ENCODE measurements at regions of chr9 and their contacts with region 1.

Region 1: GRCh38 chr9:91207729-91208418 is 153.8 kb downstream of the AUH start:
- DNase-seq: peak; percentile 61
- H3K4me3 Mint-ChIP-seq: peak overlapping the region; percentile 7
- H3K27ac Mint-ChIP-seq: peak overlapping the region; percentile 98
- H3K4me1 Mint-ChIP-seq: peaks cover 68% of the 10 kb centered on the region
- H3K27me3 Mint-ChIP-seq: no peaks in the 10 kb centered on the region

Region 2: GRCh38 chr9:91036826-91037510 is 170.9 kb before region 1 on chr9:
- CTCF ChIA-PET with region 1: interaction called, 4 read pairs
- intact Hi-C with region 1: loop called (anchors 1 kb)
- DNase-seq: peak; percentile 87
- H3K4me3 Mint-ChIP-seq: peak overlapping the region; percentile 42
- H3K27ac Mint-ChIP-seq: no peak overlapping the region
- H3K4me1 Mint-ChIP-seq: peaks cover 27% of the 10 kb centered on the region
- H3K27me3 Mint-ChIP-seq: peaks cover 36% of the 10 kb centered on the region

Region 3: DNA sequence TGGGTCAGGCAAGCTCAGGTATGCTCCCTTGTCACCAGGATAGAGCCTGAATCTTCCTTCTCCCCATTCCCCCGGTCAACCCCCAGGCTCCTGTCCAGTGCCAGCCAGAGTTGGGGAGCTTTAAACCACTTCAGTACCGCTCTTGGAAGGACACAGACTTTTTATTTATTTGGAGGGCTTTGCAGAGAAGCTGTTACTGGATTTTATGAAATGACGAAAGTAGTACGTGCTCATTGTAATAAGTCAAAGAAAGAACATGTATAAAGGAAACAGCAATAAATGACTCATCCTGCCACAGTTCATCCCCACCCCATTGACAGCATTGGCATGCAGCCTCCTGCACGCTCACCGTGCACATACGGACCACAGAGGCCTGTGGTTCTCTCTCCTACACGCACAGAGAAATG is 76.4 kb before region 1 on chr9:
- CTCF ChIA-PET with region 1: no interaction called
- intact Hi-C with region 1: loop called (anchors 1 kb)
- DNase-seq: peak; percentile 86
- H3K4me3 Mint-ChIP-seq: no peak overlapping the region
- H3K27ac Mint-ChIP-seq: peak overlapping the region; percentile 82
- H3K4me1 Mint-ChIP-seq: peaks cover 15% of the 10 kb centered on the region
- H3K27me3 Mint-ChIP-seq: peaks cover 11% of the 10 kb centered on the region

Region 4: DNA sequence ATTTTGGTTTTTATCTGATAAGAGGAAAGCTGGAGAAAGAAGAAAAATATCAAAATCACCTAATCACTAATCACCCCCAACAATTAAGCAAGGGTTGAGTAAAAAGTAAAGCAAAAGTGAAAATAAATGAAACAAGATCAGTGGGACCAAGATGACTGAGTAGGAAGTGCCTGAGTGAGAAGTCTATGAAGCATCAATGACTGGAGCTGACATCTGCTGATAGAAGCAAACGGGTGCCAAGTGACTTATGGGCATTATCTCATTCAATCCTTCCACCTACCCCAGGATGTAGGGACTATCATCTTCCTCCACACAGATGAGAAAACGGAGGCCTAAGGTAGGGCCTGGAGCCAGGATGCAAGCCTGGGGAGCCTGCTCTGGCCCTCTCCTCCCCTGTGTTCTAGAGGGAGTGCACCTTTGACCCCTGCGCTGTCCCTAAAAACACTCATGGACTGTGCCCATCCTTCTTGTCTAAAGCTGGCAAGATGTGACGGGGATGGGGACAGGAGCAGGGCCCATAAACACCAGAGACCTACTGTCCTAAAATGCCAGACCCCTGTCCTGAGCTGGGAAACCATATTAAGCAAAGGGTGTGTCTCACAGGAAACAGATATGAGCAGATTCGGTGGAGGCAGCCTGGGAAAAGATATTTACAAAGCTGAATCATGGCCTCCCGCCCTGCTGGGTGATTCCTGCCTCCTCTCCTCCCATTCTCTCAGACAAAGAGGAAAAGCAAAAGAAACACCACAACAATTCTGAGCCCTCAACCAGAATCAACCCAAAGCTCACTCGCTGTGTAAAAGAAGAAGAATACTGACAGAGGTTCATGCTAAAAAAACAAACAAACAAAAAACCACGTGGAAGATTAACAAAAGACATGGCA is 37.8 kb after region 1 on chr9:
- CTCF ChIA-PET with region 1: no interaction called
- intact Hi-C with region 1: loop called (anchors 1 kb)
- DNase-seq: peak; percentile 58
- H3K4me3 Mint-ChIP-seq: no peak overlapping the region
- H3K27ac Mint-ChIP-seq: peak overlapping the region; percentile 64
- H3K4me1 Mint-ChIP-seq: peaks cover 18% of the 10 kb centered on the region
- H3K27me3 Mint-ChIP-seq: no peaks in the 10 kb centered on the region

Region 5: GRCh38 chr9:91359734-91360470 is 152.0 kb after region 1 on chr9:
- CTCF ChIA-PET with region 1: interaction called, 3 read pairs
- intact Hi-C with region 1: loop called (anchors 1 kb)
- DNase-seq: no peak
- H3K4me3 Mint-ChIP-seq: peak overlapping the region; percentile 91
- H3K27ac Mint-ChIP-seq: peak overlapping the region; percentile 54
- H3K4me1 Mint-ChIP-seq: peaks cover 47% of the 10 kb centered on the region
- H3K27me3 Mint-ChIP-seq: no peaks in the 10 kb centered on the region

Region 6: GRCh38 chr9:91422758-91423711 is 215.2 kb after region 1 on chr9:
- CTCF ChIA-PET with region 1: interaction called, 4 read pairs
- intact Hi-C with region 1: loop called (anchors 1 kb)
- DNase-seq: peak; percentile 74
- H3K4me3 Mint-ChIP-seq: peak overlapping the region; percentile 94
- H3K27ac Mint-ChIP-seq: peak overlapping the region; percentile 81
- H3K4me1 Mint-ChIP-seq: peaks cover 57% of the 10 kb centered on the region
- H3K27me3 Mint-ChIP-seq: peaks cover 9% of the 10 kb centered on the region

Measured in activated naive CD4-positive, alpha-beta T cell treated with anti-CD3 and anti-CD28 coated beads for 36 hours (primary cell).